Posterior vena cava (tissue), 2 donors: ENCODE measurements at regions of chr14 and their contacts with region 1.

Region 1: GRCh38 chr14:60656686-60657455 is 7.6 kb upstream of the SIX1 start:
- DNase-seq: peak; percentile 86

Region 2: GRCh38 chr14:60724137-60724619 is 67.3 kb after region 1 on chr14 and contains the start of gene SIX4:
- intact Hi-C with region 1: loop called in 1 of 2 experiments (anchors 5 kb)
- DNase-seq: peak; percentile 84
- total RNA-seq, gene SIX4: 1.3 to 3.2 TPM